ENCODE measurements at regions of chr6 and their contacts with region 1.

Region 1: GRCh38 chr6:56595490-56596122 is 47.1 kb downstream of the DST start:
- DNase-seq: peak; percentile 40
- ATAC-seq: peak; percentile 73 to 77

Region 2: GRCh38 chr6:56364827-56365313 is 230.7 kb before region 1 on chr6:
- intact Hi-C with region 1: loop called in 1 of 2 experiments (anchors 5 kb)
- DNase-seq: no peak
- ATAC-seq: peak in 1 of 2 donors; percentile 60

Region 3: GRCh38 chr6:56430629-56431600 is 164.7 kb before region 1 on chr6:
- intact Hi-C with region 1: no loop called
- DNase-seq: no peak
- ATAC-seq: no peak

Region 4: DNA sequence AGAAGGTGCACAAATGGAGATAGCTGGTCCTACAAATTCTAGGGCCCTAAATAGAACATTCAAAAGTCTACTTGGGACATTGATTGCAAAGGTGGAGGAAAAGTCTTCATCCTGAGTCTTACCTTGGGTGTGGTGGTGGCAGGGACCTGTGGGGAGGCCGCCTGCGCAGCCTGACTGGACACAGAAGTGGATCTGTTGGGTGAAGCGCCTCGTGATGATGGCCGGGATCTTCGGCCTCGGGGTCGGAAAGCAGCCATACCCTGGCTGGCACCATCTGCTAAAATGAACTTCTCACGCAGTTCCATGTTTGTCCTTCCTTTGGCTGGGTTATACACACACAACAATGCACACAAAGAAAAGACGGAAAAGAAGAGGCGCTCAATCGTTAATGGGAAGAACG is 132.2 kb before region 1 on chr6:
- intact Hi-C with region 1: loop called in 1 of 2 experiments (anchors 10 kb)
- DNase-seq: no peak
- ATAC-seq: no peak